Caco-2 (cell line): ENCODE measurements at regions of chr11 and their contacts with region 1.

Region 1: DNA sequence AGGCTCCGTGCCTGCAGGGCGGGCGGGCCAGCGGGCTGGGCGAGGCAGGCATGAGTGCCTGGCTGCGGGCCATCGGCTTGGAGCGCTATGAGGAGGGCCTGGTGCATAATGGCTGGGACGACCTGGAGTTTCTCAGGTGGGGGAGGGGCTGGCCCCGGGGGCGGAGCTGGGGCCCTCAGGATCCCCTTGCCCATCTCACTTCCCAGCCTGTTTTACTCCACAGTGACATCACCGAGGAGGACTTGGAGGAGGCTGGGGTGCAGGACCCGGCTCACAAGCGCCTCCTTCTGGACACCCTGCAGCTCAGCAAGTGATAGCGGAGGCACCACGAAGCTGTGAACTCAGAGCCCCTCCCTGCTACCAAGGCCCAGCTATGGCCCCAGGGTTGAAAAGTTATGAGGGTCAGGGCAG is 5.9 kb downstream of the PHOX2A start:
- DNase-seq: peak; percentile 68 to 72
- H3K4me3 ChIP-seq: no peak overlapping the region
- H3K4me3 Mint-ChIP-seq: no peak overlapping the region
- H3K27ac Mint-ChIP-seq: no peak overlapping the region
- H3K4me1 ChIP-seq: peaks cover 24% of the 10 kb centered on the region
- H3K4me1 Mint-ChIP-seq: peaks cover 14% of the 10 kb centered on the region
- H3K27me3 ChIP-seq: no peaks in the 10 kb centered on the region
- H3K27me3 Mint-ChIP-seq: no peaks in the 10 kb centered on the region
- CTCF ChIP-seq: peak; percentile 65 to 72

Region 2: DNA sequence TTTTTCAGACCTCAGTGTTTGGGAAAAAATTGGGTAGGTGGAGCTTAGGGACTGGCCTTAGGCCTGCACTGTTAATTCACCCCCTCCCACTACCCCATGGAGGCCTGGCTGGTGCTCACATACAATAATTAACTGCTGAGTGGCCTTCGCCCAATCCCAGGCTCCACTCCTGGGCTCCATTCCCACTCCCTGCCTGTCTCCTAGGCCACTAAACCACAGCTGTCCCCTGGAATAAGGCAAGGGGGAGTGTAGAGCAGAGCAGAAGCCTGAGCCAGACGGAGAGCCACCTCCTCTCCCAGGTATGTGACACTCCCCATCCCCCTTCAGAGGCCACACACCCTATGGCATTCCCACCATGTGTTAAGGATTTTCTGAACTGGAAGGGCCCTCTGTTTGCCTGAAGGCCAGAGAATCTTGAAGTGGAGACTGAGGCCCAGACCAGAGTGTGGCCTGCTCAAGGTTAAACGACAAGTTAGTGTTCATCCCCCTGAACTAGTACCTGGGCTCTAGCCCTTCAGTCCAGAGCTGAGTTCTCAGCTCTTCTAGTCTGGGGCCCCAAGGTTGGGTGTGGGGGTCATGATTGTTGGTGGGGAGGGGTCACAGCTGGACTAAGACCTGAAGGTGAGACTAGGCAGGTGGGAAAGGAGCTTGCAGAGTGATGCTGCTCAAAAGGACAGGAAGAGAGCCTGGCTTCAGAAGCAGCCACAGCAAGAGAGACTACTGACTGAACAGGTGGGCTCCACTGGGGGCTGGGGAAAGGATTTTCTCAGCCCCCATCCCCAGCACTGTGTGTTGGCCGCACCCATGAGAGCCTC is 48.4 kb before region 1 on chr11:
- CTCF ChIA-PET with region 1: no interaction called
- POLR2A ChIA-PET with region 1: interaction called, 4 read pairs
- intact Hi-C with region 1: loop called (anchors 2 kb)
- DNase-seq: peak; percentile 77 to 88
- H3K4me3 ChIP-seq: no peak overlapping the region
- H3K4me3 Mint-ChIP-seq: peak overlapping the region; percentile 27
- H3K27ac Mint-ChIP-seq: peak overlapping the region; percentile 93
- H3K4me1 ChIP-seq: peaks cover 34% of the 10 kb centered on the region
- H3K4me1 Mint-ChIP-seq: peaks cover 23% of the 10 kb centered on the region
- H3K27me3 ChIP-seq: no peaks in the 10 kb centered on the region
- H3K27me3 Mint-ChIP-seq: no peaks in the 10 kb centered on the region
- CTCF ChIP-seq: no peak

Region 3: GRCh38 chr11:72683782-72684200 is 445.7 kb after region 1 on chr11:
- CTCF ChIA-PET with region 1: no interaction called
- POLR2A ChIA-PET with region 1: no interaction called
- intact Hi-C with region 1: no loop called
- DNase-seq: peak; percentile 76 to 89
- H3K4me3 ChIP-seq: no peak overlapping the region
- H3K4me3 Mint-ChIP-seq: no peak overlapping the region
- H3K27ac Mint-ChIP-seq: no peak overlapping the region
- H3K4me1 ChIP-seq: no peaks in the 10 kb centered on the region
- H3K4me1 Mint-ChIP-seq: peaks cover 6% of the 10 kb centered on the region
- H3K27me3 ChIP-seq: no peaks in the 10 kb centered on the region
- H3K27me3 Mint-ChIP-seq: peaks cover 9% of the 10 kb centered on the region
- CTCF ChIP-seq: peak; percentile 99